Activated B cell treated with CpG ODN at 0.5 μM for 24 hours (primary cell): ENCODE measurements at regions of chr3 and their contacts with region 1.

Region 1: DNA sequence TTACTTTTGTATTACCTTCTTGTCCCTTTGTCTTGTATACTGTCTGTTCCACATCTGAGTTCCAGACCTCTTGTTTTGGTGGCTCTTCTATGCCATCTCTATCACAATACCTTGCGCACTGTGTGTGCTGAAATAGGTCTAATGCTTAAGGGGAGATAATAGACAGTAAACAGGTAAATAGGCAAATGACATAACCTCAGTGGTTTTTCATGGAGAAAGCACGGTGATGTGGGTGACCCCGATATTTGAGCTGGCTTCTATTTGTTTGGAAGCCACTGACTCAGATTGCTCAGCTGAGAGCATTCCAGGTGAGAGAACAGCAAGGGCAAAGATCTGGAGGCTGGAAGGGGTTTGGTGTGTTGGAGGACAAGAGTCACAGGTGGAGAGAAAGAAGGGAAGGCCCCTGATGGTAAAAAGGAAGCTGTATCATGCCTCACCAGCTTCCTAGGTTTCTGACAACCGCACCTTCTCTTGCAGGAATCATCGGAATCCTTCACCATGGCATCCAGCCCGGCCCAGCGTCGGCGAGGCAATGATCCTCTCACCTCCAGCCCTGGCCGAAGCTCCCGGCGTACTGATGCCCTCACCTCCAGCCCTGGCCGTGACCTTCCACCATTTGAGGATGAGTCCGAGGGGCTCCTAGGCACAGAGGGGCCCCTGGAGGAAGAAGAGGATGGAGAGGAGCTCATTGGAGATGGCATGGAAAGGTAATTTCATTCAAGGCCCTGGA is 795 bp downstream of the MCM2 start:
- DNase-seq: no peak
- ATAC-seq: no peak
- H3K4me3 Mint-ChIP-seq: peak overlapping the region; percentile 95
- H3K27ac Mint-ChIP-seq: peak overlapping the region; percentile 93
- H3K4me1 Mint-ChIP-seq: peaks cover 29% of the 10 kb centered on the region
- H3K27me3 Mint-ChIP-seq: no peaks in the 10 kb centered on the region
- CTCF ChIP-seq: no peak

Region 2: DNA sequence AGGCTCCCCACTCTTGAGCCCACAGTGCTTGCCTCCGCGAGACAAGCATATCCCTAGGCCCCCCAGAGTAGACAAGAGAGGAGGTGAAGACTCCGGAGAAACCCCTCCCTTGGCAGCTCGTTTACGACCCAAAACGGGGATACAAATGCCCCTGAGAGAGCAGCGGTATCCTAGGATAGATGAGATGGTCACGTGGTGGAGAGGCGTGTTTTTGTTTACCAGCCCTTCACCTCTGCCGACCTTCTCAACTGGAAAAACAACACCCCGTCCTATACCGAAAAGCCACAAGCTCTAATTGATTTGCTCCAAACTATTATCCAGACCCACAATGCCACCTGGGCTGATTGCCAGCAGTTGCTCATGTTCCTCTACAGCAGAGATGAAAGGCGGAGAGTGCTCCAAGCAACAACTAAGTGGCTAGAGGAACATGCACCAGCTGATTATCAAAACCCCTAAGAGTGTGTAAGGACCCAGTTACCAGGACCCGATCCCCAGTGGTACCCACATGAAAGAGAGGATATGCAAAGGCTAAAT is 1904.2 kb before region 1 on chr3:
- CTCF ChIA-PET with region 1: no interaction called
- POLR2A ChIA-PET with region 1: no interaction called
- intact Hi-C with region 1: no loop called
- DNase-seq: no peak
- ATAC-seq: no peak
- H3K4me3 Mint-ChIP-seq: no peak overlapping the region
- H3K27ac Mint-ChIP-seq: no peak overlapping the region
- H3K4me1 Mint-ChIP-seq: peaks cover 4% of the 10 kb centered on the region
- H3K27me3 Mint-ChIP-seq: no peaks in the 10 kb centered on the region
- CTCF ChIP-seq: no peak

Region 3: DNA sequence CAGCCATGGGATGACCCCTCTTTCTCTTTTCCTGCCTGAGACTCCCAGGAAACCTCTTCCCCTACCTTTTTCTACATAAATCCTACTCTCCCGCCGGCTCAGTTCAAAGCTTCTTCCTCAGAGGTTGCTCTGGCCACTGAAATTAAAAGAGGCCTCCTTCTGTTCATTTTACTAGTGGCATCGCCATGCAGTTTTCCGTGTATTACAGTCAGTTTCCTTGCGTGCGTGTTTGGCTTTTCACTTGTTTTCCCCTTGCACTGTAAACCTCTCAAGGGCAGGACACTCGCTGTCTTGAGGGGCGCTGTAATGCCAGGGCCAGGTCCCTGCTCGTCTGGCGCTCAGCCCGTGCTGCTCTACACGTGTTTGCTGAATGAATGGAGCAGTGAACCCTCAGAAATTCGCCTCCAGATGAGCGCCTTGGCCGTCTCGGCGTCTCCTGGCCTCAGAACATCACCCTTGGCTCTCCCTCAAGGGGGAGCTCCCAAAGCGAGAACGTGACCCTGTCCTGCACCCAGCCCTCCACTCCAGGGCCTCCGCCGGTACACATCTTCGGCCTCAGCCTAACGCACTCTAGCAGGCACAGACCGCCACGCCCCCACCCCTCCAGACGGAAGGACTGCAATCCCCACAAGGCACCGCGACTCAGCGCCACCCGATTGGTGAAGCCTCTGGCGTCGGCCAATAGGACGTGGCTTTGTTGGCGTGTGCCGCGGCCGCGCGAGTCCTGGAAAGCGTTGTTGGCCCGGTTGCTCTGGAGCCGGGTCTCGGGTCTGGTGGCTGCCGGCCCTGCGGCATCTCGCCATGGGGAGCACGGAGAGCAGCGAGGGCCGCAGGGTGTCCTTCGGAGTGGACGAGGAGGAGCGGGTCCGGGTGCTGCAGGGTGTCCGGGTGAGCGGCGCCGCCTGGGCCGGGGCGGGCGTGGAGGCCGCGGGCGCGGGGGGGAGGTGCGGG is 895.2 kb before region 1 on chr3 and contains the start of gene CHCHD6:
- CTCF ChIA-PET with region 1: no interaction called
- POLR2A ChIA-PET with region 1: no interaction called
- intact Hi-C with region 1: loop called (anchors 5 kb)
- DNase-seq: peak; percentile 94
- ATAC-seq: peak; percentile 96
- H3K4me3 Mint-ChIP-seq: peak within 1 kb of the TSS; percentile 99
- H3K27ac Mint-ChIP-seq: peak within 1 kb of the TSS; percentile 74
- H3K4me1 Mint-ChIP-seq: peaks cover 17% of the 10 kb centered on the region
- H3K27me3 Mint-ChIP-seq: peaks cover 32% of the 10 kb centered on the region
- CTCF ChIP-seq: no peak
- total RNA-seq, gene CHCHD6: 7.5 and 10.0 TPM in 2 replicates

Region 4: DNA sequence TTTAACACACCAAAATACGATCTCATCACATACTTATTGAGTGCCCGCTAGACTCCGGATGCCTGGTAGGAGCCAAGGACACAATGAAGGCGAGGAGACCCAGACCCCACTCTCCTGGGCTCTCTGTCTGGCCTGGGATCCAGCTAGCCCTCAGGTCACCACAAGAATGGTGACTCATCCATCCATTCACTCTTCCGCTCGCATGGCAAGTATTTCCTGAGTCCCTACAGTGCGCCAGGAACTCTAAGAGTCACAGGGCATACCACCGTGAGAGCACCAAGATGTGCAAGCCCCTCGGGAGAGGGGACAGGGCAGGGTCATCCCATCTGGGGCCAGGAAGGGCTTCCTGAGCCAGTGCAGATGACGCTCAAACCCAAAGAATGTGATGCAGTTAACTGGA is 209.6 kb before region 1 on chr3:
- CTCF ChIA-PET with region 1: no interaction called
- POLR2A ChIA-PET with region 1: no interaction called
- intact Hi-C with region 1: no loop called
- DNase-seq: no peak
- ATAC-seq: no peak
- H3K4me3 Mint-ChIP-seq: no peak overlapping the region
- H3K27ac Mint-ChIP-seq: no peak overlapping the region
- H3K4me1 Mint-ChIP-seq: no peaks in the 10 kb centered on the region
- H3K27me3 Mint-ChIP-seq: peaks cover 8% of the 10 kb centered on the region
- CTCF ChIP-seq: no peak

Region 5: GRCh38 chr3:127612966-127613365 is 14.0 kb after region 1 on chr3:
- CTCF ChIA-PET with region 1: interaction called, 5 read pairs
- POLR2A ChIA-PET with region 1: interaction called, 12 read pairs
- intact Hi-C with region 1: loop called (anchors 1 kb)
- DNase-seq: no peak
- ATAC-seq: no peak
- H3K4me3 Mint-ChIP-seq: no peak overlapping the region
- H3K27ac Mint-ChIP-seq: no peak overlapping the region
- H3K4me1 Mint-ChIP-seq: peaks cover 22% of the 10 kb centered on the region
- H3K27me3 Mint-ChIP-seq: no peaks in the 10 kb centered on the region
- CTCF ChIP-seq: no peak

Region 6: DNA sequence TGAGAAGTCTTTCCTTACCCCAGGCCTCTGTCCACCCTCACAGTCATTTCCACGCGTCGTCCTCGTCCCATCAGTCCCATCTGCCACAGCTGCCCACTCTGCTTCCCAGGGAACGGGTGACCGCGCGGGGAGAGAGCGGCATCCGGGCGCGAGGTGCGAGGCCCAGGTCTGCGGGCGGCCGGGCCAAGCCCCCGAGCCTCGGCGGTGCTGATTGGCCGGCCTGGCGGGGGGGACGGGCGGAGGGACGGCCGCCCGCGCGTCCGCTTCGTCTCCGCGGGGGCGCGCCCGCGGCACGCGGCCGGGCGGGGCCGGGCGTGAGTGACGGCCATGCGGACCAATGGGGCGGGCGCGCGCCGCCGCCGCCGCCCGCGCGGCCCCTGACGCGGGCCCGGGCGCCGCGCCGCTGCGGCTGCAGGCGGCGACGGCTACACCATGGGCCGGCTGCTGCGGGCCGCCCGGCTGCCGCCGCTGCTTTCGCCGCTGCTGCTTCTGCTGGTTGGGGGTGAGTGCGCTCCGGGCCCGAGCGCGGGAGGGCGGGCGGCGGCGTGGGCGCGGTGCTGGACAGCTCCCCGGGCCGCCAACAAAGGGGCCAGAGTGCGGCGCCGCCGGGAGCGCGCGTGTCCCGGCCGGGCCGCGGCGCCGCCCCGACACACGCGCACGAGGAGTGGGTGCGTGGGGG is 29.9 kb after region 1 on chr3 and contains the start of gene PODXL2:
- CTCF ChIA-PET with region 1: no interaction called
- POLR2A ChIA-PET with region 1: interaction called, 13 read pairs
- intact Hi-C with region 1: no loop called
- DNase-seq: peak; percentile 39
- ATAC-seq: peak; percentile 68
- H3K4me3 Mint-ChIP-seq: peak within 1 kb of the TSS; percentile 84
- H3K27ac Mint-ChIP-seq: peak within 1 kb of the TSS; percentile 20
- H3K4me1 Mint-ChIP-seq: peaks cover 21% of the 10 kb centered on the region
- H3K27me3 Mint-ChIP-seq: peaks cover 11% of the 10 kb centered on the region
- CTCF ChIP-seq: no peak
- total RNA-seq, gene PODXL2: 3.3 and 3.7 TPM in 2 replicates